ENCODE measurements at regions of chr5 and their contacts with region 1.

Region 1: DNA sequence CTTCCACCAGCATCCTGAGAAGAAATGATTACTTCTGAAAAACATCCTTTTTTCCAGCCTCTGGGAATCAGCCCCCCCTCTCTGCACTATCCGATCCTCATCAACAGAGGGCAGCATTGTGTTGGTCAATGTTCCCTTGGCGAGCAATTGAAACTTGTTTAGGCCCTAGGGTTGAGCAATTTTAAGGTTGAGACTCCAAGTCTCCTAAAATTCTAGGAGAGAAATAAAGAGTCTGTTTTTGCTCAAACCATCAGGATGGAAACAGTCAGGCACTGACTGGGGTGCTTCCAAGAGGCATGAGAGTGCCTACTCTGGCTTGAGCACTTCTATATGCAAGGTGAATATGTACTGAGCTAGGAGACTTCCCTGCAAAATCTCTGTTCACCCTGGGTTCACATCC is 12.4 kb upstream of the CYFIP2 start:
- DNase-seq: no peak
- ATAC-seq: peak; percentile 84
- H3K4me3 Mint-ChIP-seq: peak overlapping the region; percentile 57
- H3K27ac Mint-ChIP-seq: peak overlapping the region; percentile 85
- H3K4me1 Mint-ChIP-seq: peaks cover 28% of the 10 kb centered on the region
- H3K27me3 Mint-ChIP-seq: no peaks in the 10 kb centered on the region
- CTCF ChIP-seq: peak; percentile 94

Region 2: DNA sequence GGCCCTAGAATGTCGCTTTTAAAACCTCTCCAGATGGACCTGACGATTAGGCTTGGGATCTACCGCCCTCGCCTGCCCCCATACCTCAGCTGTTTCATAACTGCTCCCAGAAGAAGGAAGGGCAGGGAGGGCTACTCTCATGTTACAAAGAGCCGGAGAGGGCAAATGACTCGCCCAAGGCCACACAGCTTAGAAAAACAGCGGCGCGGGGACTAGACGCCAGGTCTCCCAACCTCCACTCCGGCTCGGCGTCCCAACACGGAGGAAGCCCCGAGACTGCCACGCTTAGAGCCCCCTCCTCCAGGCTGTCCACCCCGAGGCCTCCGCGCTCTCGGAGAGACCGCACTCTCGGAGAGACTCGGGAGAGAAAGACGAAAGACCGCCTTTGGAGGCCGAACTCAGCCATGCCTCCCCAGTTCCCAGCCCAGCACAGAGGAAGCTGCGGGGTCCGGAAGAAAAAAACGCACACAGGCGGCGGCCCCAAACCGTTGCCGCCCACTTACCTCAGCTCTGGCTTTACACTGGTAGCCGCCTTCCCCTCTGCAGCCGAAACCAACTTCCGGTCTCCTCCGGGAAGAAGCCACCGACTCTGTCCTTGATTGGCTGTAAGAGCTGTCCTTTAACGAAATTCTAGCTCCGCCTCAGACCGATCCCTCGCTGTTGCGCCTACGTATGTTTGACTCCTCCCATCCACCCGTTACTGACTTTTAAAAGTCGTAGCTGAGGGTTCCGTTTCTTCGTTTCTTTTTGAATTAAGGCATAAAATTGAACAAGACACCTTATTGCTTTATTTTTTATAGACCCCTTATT is 111.0 kb before region 1 on chr5 and contains the start of gene MED7:
- CTCF ChIA-PET with region 1: interaction called, 105 read pairs
- POLR2A ChIA-PET with region 1: no interaction called
- intact Hi-C with region 1: no loop called
- DNase-seq: peak; percentile 75
- ATAC-seq: peak; percentile 97
- H3K4me3 Mint-ChIP-seq: peak within 1 kb of the TSS; percentile 99
- H3K27ac Mint-ChIP-seq: peak within 1 kb of the TSS; percentile 99
- H3K4me1 Mint-ChIP-seq: peaks cover 45% of the 10 kb centered on the region
- H3K27me3 Mint-ChIP-seq: no peaks in the 10 kb centered on the region
- CTCF ChIP-seq: no peak
- total RNA-seq, gene MED7: 14.0 and 16.1 TPM in 2 replicates

Region 3: GRCh38 chr5:157219491-157220271 is 33.9 kb before region 1 on chr5:
- CTCF ChIA-PET with region 1: interaction called, 13 read pairs
- POLR2A ChIA-PET with region 1: no interaction called
- intact Hi-C with region 1: loop called (anchors 5 kb)
- DNase-seq: no peak
- ATAC-seq: no peak
- H3K4me3 Mint-ChIP-seq: no peak overlapping the region
- H3K27ac Mint-ChIP-seq: no peak overlapping the region
- H3K4me1 Mint-ChIP-seq: peaks cover 47% of the 10 kb centered on the region
- H3K27me3 Mint-ChIP-seq: no peaks in the 10 kb centered on the region
- CTCF ChIP-seq: no peak

Region 4: GRCh38 chr5:157271740-157272271 is 18.3 kb after region 1 on chr5:
- CTCF ChIA-PET with region 1: interaction called, 48 read pairs
- POLR2A ChIA-PET with region 1: interaction called, 21 read pairs
- intact Hi-C with region 1: loop called (anchors 1 kb)
- DNase-seq: peak; percentile 74
- ATAC-seq: peak; percentile 86
- H3K4me3 Mint-ChIP-seq: peak overlapping the region; percentile 73
- H3K27ac Mint-ChIP-seq: peak overlapping the region; percentile 99
- H3K4me1 Mint-ChIP-seq: peaks cover 93% of the 10 kb centered on the region
- H3K27me3 Mint-ChIP-seq: no peaks in the 10 kb centered on the region
- CTCF ChIP-seq: no peak

Region 5: GRCh38 chr5:157290981-157291711 is 37.6 kb after region 1 on chr5:
- CTCF ChIA-PET with region 1: interaction called, 7 read pairs
- POLR2A ChIA-PET with region 1: no interaction called
- intact Hi-C with region 1: loop called (anchors 1 kb)
- DNase-seq: no peak
- ATAC-seq: peak; percentile 94
- H3K4me3 Mint-ChIP-seq: no peak overlapping the region
- H3K27ac Mint-ChIP-seq: peak overlapping the region; percentile 89
- H3K4me1 Mint-ChIP-seq: peaks cover 48% of the 10 kb centered on the region
- H3K27me3 Mint-ChIP-seq: no peaks in the 10 kb centered on the region
- CTCF ChIP-seq: no peak

Region 6: DNA sequence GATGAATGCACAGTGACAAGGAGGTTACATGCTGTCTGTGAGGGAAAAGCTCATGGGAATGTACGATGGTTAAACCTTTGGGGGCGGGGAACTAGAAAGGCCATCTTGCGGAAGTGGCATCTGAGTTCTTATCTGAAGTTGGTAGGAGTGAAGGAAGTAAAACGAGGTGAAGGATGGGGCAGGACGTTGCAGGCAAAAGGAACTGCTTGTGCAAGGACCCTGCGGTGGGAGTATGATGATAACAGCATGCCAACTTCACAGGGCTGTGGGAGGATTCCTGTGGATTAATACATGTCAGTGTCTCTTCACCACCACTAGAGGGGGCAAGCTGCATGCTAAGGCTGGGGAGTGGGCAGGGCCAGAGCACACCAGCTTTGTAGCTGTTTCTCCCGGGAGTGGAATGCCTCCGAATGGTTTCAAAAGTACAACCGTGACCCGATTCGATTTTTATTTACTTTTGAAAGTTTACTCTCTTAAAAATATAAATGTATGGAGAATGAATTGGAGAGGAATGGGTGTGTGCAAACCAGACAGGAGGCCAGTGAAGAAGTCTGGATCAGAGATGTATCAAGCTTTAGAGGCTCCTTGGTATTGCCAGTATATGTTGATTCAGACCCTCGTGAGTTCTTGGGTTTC is 74.8 kb after region 1 on chr5:
- CTCF ChIA-PET with region 1: interaction called, 52 read pairs
- POLR2A ChIA-PET with region 1: no interaction called
- intact Hi-C with region 1: loop called (anchors 1 kb)
- DNase-seq: no peak
- ATAC-seq: peak; percentile 100
- H3K4me3 Mint-ChIP-seq: no peak overlapping the region
- H3K27ac Mint-ChIP-seq: peak overlapping the region; percentile 36
- H3K4me1 Mint-ChIP-seq: peaks cover 6% of the 10 kb centered on the region
- H3K27me3 Mint-ChIP-seq: no peaks in the 10 kb centered on the region
- CTCF ChIP-seq: peak; percentile 59